Activated CD4-positive, alpha-beta T cell treated with anti-CD3 and anti-CD28 coated beads for 36 hours (primary cell): ENCODE measurements at regions of chr20 and their contacts with region 1.

Region 1: GRCh38 chr20:58407966-58408557 is 19.0 kb downstream of the VAPB start:
- DNase-seq: peak; percentile 54
- ATAC-seq: peak; percentile 90
- H3K4me3 Mint-ChIP-seq: peak overlapping the region; percentile 36
- H3K27ac Mint-ChIP-seq: peak overlapping the region; percentile 87
- H3K4me1 Mint-ChIP-seq: peaks cover 32% of the 10 kb centered on the region
- H3K27me3 Mint-ChIP-seq: no peaks in the 10 kb centered on the region

Region 2: DNA sequence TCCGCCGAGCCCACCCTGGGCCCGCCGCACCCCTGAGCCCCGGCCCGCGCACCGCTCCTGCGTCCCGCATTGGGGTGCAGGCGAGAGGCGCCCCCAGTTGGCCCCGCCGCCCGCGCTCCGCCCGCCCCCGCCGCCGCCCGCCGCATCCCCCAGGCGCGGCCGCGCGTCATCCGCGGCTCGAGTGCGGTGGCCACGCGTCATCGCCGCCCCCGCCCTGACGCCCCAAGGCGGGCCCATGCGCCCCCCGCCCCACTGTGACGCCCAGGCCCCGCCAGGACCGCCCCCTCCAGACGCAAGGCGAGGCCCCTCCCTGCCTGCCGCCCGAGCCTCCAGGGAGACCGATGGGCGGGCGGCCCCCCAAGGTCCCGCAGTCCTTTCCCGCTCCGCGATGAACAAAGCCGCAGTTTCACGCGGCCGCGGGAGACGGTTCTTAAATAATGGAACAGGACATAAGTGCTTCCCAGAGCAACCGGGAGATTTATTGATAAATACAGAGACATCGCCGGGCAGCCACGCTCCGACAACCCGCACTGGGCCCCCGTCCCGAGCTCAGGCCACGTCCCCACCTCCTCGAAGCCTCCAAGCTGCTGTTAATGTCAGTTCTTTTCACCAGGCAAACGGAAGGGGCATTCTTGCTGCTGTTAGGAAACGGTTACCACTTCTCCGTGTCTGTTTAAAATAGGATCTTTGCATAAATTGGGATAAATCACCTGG is 179.4 kb before region 1 on chr20 and contains the start of gene ANKRD60:
- CTCF ChIA-PET with region 1: no interaction called
- POLR2A ChIA-PET with region 1: no interaction called
- intact Hi-C with region 1: no loop called
- DNase-seq: peak; percentile 69
- ATAC-seq: peak; percentile 34
- H3K4me3 Mint-ChIP-seq: peak within 1 kb of the TSS; percentile 63
- H3K27ac Mint-ChIP-seq: no peak within 1 kb of the TSS
- H3K4me1 Mint-ChIP-seq: peaks cover 24% of the 10 kb centered on the region
- H3K27me3 Mint-ChIP-seq: peaks cover 35% of the 10 kb centered on the region
- total RNA-seq, gene ANKRD60: not detected

Region 3: DNA sequence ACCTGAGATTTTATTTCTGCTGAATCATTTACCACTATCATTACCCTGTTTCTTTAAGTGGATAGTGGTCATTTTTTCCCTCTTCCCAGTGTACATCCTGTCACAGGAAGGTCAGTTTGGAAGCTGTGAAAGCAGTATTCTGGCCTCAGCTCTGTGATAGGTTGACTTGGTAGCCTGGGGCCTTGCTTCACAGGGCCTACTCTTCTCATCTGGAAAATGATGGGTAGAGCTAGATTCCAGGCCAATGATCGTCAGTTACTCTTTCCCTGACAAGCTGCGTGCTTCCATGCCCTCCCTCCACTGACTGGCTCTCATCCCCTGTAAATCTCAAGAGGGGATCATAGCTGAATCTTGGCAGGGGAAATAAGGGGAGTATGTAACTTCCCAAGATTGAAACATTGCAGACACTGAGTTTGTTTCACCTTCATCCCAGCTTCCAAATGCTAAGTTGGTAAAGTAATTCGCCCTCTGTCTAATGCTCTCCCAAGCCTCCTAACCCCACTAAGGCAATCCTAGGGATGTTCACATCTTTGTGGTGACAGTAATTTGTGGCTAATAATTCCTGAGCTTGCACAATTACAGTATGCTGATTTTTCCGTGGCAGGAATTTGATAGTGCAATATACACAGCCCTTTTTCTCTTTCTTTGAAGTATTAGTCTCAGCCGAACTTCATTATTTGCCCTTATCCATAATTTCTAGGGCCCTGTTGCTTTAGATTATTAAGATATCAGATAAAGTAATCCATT is 32.1 kb after region 1 on chr20:
- CTCF ChIA-PET with region 1: no interaction called
- POLR2A ChIA-PET with region 1: no interaction called
- intact Hi-C with region 1: loop called in 1 of 2 experiments (anchors 5 kb)
- DNase-seq: no peak
- ATAC-seq: no peak
- H3K4me3 Mint-ChIP-seq: no peak overlapping the region
- H3K27ac Mint-ChIP-seq: peak overlapping the region; percentile 12
- H3K4me1 Mint-ChIP-seq: peaks cover 25% of the 10 kb centered on the region
- H3K27me3 Mint-ChIP-seq: no peaks in the 10 kb centered on the region

Region 4: GRCh38 chr20:58481481-58482021 is 73.5 kb after region 1 on chr20:
- CTCF ChIA-PET with region 1: no interaction called
- POLR2A ChIA-PET with region 1: no interaction called
- intact Hi-C with region 1: no loop called
- DNase-seq: peak; percentile 82
- ATAC-seq: peak; percentile 78
- H3K4me3 Mint-ChIP-seq: no peak overlapping the region
- H3K27ac Mint-ChIP-seq: no peak overlapping the region
- H3K4me1 Mint-ChIP-seq: no peaks in the 10 kb centered on the region
- H3K27me3 Mint-ChIP-seq: peaks cover 15% of the 10 kb centered on the region

Region 5: GRCh38 chr20:59149651-59150504 is 741.8 kb after region 1 on chr20:
- CTCF ChIA-PET with region 1: no interaction called
- POLR2A ChIA-PET with region 1: no interaction called
- intact Hi-C with region 1: loop called in 1 of 2 experiments (anchors 10 kb)
- DNase-seq: peak; percentile 82
- ATAC-seq: peak; percentile 42
- H3K4me3 Mint-ChIP-seq: peak overlapping the region; percentile 58
- H3K27ac Mint-ChIP-seq: peak overlapping the region; percentile 95
- H3K4me1 Mint-ChIP-seq: peaks cover 96% of the 10 kb centered on the region
- H3K27me3 Mint-ChIP-seq: no peaks in the 10 kb centered on the region